ENCODE measurements at regions of chr4 and their contacts with region 1.

Region 1: DNA sequence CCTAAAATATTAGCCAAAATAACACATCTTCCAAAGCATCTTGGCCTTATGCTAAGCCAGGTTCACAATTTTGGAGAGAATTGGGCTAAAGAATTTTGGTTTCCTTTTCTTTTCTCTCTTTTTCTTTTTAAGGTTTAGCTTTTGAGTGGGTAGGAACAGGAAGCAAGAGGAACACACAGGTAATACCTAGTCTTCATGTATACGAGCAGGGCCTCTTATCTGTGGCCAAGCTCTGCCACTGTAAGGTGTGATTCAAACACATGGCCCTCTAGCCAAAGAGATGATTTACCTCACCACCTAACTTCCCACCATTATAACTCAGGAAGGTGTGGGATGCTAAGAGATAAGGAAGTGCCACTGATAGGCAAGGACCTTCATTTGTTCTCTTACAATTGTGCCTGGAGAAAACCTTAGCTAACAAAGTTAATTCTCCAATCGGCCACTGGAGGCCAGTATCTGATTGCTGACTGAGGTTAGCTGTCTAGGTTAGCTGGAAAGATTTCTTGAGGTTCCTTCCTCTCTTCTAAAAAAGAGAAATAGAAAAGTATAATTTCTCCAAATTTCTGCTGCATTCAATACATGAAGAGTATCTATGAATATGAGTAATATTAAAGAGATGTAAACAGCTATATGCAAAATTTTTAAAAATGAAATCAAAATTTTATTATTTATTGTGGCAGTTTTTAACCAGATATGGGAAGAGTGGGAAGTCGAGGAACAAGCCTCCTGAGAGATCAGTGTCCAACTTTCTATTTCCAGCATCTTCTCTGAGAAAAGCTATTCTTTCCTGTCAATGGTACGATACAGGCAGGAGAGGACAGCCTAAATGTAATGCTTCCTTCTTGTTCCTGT is 30.1 kb upstream of the BBS7 start:
- DNase-seq: peak; percentile 37
- CTCF ChIP-seq: peak; percentile 79

Region 2: DNA sequence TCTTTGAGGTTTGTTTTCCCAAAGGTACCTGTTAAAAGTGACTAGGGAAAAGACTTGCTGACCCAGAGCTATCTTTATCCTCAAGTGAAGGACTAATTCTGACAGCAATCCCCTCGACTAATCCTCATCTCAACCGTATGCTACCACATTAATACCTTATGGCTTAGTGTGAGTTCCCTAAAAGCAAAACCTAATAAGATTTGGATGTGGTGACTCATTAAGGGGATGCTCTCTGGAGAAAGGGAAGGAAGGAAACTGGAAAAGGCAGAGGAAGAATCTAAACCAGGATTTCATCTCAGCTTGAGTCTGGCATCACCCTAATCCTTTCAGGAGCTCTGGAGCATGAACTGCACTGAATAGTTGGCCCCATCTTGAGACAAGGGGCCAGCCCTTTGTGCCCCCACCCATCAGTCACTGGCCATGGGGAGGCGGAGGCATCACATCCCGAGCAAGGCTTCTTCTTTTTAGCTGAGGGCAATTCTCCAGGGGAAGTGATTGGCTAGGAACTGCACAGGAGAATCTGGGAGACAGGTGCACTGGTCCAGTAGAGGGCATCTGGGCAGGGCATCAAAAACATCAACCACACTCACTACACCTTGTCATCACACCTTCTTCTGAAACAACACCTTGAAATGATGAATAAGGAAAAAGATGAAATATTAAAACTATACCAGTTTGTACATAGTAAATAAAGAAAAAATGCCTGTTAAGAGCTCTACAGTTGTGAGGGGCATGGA is 23.1 kb before region 1 on chr4:
- CTCF ChIA-PET with region 1: interaction called, 17 read pairs
- POLR2A ChIA-PET with region 1: no interaction called
- DNase-seq: no peak
- CTCF ChIP-seq: no peak

Region 3: GRCh38 chr4:121885115-121885514 is 15.2 kb before region 1 on chr4:
- CTCF ChIA-PET with region 1: interaction called, 12 read pairs
- POLR2A ChIA-PET with region 1: no interaction called
- DNase-seq: no peak
- CTCF ChIP-seq: no peak

Region 4: GRCh38 chr4:121913667-121914066 is 13.3 kb after region 1 on chr4:
- CTCF ChIA-PET with region 1: interaction called, 31 read pairs
- POLR2A ChIA-PET with region 1: no interaction called
- DNase-seq: no peak
- CTCF ChIP-seq: no peak

Measured in GM10248 (cell line).